Activated naive CD4-positive, alpha-beta T cell treated with anti-CD3 and anti-CD28 coated beads for 36 hours (primary cell): ENCODE measurements at regions of chr21 and their contacts with region 1.

Region 1: DNA sequence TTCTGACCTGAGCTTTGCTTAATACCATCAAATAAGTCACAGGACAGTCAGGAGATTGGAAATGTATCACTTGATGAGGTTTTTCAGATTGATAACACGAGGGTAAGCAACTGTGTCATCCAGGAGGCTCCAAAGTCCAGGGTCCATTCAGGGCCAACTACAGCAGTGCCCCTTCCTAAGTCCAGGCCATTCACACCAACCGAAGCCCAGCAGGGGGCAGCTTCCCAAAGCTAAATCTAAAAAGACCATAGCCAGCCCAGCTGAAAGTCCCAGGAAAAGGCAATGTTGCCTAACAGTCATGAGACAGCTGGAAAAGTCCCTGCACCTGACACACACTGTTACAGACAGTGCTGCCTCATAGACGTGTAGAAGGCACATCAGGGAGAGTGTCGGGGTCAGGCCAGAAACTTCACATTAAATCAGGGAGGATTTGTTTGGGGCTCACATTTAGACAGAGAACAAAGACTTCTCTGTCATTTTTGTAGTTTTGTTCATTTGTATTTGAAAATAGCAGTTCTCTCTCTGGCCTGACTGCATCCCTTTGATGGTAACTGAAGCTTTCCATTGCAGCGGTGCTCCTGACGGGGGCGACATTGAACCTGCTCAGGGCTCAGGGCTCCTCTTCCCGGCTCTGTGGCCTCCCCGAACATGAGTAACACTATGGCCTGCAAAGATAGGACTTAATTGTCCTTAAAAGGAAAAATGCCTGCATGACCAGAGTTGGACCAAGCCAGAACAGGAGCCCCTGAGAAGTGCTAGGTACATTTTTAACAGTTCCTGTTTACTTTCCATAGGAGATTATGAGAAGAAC is 200.4 kb downstream of the NRIP1 start:
- DNase-seq: peak; percentile 74
- H3K4me3 Mint-ChIP-seq: no peak overlapping the region
- H3K27ac Mint-ChIP-seq: no peak overlapping the region
- H3K4me1 Mint-ChIP-seq: peaks cover 10% of the 10 kb centered on the region
- H3K27me3 Mint-ChIP-seq: peaks cover 2% of the 10 kb centered on the region

Region 2: DNA sequence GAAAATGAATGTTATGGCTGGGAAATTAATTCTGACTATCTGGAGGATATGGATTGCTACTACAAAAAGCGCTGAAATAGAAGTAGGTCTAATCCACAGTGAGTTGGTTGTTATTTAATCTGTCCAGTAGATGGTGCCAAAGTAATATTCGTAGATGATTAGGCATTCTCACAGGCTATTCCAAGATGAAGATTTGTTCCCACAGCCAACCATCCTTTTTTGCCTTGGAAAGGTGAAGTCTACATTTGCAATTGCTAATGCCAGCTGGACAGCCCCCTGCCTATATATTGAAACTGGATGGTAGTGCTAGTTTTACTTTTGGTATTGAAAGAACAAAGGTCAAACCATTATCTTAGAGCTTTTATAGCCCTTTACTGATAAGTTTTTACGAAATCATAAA is 604.7 kb before region 1 on chr21:
- CTCF ChIA-PET with region 1: no interaction called
- intact Hi-C with region 1: loop called (anchors 5 kb)
- DNase-seq: no peak
- H3K4me3 Mint-ChIP-seq: no peak overlapping the region
- H3K27ac Mint-ChIP-seq: no peak overlapping the region
- H3K4me1 Mint-ChIP-seq: peaks cover 8% of the 10 kb centered on the region
- H3K27me3 Mint-ChIP-seq: no peaks in the 10 kb centered on the region

Region 3: GRCh38 chr21:14438211-14438610 is 426.2 kb before region 1 on chr21:
- CTCF ChIA-PET with region 1: no interaction called
- intact Hi-C with region 1: loop called (anchors 10 kb)
- DNase-seq: no peak
- H3K4me3 Mint-ChIP-seq: no peak overlapping the region
- H3K27ac Mint-ChIP-seq: no peak overlapping the region
- H3K4me1 Mint-ChIP-seq: no peaks in the 10 kb centered on the region
- H3K27me3 Mint-ChIP-seq: peaks cover 1% of the 10 kb centered on the region

Region 4: GRCh38 chr21:15221799-15222386 is 357.5 kb after region 1 on chr21:
- CTCF ChIA-PET with region 1: no interaction called
- intact Hi-C with region 1: loop called (anchors 5 kb)
- DNase-seq: peak; percentile 48
- H3K4me3 Mint-ChIP-seq: no peak overlapping the region
- H3K27ac Mint-ChIP-seq: peak overlapping the region; percentile 30
- H3K4me1 Mint-ChIP-seq: peaks cover 29% of the 10 kb centered on the region
- H3K27me3 Mint-ChIP-seq: peaks cover 4% of the 10 kb centered on the region

Region 5: DNA sequence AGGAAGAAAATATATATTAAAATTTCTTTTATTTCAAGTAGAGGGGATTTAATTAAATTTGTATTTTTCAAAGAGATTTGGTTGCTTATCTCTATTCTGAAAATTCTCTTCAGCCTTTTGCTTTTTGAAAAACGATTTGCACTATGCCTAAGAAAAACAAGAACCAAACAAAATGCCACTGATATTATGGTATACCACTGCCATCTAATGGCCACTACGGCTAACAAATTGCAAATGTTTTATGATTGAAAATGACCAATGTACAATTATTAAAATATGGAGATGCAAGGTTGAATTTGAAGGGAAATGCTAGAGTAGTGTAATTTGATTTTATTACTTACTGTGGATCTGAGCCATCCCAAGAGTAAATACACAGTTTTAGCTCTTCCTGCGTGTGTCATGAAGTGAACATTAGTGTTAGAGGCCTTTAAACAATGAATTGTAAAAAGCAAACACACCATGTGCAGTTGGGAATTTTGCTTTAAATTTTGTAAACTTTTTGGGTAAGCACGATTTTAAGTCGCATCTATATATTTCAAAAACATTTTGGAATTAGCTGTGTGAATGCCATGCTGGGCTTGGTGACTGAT is 728.0 kb after region 1 on chr21:
- CTCF ChIA-PET with region 1: no interaction called
- intact Hi-C with region 1: loop called (anchors 1 kb)
- DNase-seq: peak; percentile 5
- H3K4me3 Mint-ChIP-seq: no peak overlapping the region
- H3K27ac Mint-ChIP-seq: no peak overlapping the region
- H3K4me1 Mint-ChIP-seq: no peaks in the 10 kb centered on the region
- H3K27me3 Mint-ChIP-seq: no peaks in the 10 kb centered on the region

Region 6: DNA sequence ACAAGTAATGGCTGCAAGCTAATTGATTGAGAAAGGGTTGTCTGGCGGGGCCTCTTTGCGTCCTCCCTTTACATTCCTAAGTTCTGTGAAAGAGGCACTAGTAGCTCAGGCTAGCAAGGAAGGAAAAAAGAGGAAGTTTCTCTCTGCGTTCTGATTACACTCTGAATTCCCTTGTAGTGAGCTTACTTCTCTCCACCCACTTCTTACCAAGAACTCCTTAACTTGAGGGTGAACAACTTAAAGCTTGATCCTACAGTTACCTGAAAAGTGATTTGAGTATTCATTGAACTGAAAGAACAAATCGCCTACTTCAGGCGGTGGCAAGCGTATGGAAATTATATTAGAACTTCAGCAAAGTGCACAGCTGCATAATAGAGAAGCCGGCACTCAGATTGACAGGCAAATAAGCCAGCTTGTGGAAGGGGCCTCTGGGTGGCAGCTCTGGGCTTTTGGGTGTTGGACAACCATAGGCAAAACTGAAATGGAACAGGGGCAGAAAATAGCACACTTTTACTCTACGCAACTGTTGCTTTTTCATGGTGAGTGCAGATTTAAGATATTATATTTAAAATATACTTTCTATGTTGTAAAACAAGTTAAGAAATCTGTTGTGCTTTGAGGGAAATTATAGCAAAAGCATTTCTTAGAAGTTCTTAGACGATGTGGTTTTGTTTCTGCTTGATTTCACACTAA is 1329.8 kb after region 1 on chr21:
- CTCF ChIA-PET with region 1: no interaction called
- intact Hi-C with region 1: no loop called
- DNase-seq: peak; percentile 34
- H3K4me3 Mint-ChIP-seq: peak overlapping the region; percentile 57
- H3K27ac Mint-ChIP-seq: no peak overlapping the region
- H3K4me1 Mint-ChIP-seq: peaks cover 7% of the 10 kb centered on the region
- H3K27me3 Mint-ChIP-seq: no peaks in the 10 kb centered on the region